ENCODE measurements at regions of chr1 and their contacts with region 1.

Region 1: DNA sequence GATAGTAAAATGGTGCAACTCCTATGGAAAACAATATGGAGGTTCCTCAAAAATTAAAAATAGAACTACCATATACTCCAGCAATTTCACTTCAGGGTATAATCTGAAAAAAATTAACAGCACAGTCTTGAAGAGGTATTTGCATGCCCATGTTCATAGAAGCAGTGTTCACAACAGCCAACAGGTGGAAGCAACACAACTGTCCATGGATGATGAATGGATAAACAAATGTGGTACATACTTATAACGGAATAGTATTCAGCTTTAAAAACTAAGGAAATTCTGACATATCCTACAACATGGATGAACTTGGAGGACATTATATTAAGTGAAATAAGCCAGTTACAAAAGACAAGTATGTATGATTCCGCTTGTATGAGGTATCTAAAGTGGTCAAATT is 8.2 kb downstream of the TTLL7 start:
- DNase-seq: no peak
- H3K4me3 ChIP-seq: no peak overlapping the region
- H3K4me3 Mint-ChIP-seq: no peak overlapping the region
- H3K27ac Mint-ChIP-seq: no peak overlapping the region
- H3K4me1 ChIP-seq: no peaks in the 10 kb centered on the region
- H3K4me1 Mint-ChIP-seq: no peaks in the 10 kb centered on the region
- H3K27me3 ChIP-seq: no peaks in the 10 kb centered on the region
- H3K27me3 Mint-ChIP-seq: peaks cover 2% of the 10 kb centered on the region
- CTCF ChIP-seq: no peak

Region 2: DNA sequence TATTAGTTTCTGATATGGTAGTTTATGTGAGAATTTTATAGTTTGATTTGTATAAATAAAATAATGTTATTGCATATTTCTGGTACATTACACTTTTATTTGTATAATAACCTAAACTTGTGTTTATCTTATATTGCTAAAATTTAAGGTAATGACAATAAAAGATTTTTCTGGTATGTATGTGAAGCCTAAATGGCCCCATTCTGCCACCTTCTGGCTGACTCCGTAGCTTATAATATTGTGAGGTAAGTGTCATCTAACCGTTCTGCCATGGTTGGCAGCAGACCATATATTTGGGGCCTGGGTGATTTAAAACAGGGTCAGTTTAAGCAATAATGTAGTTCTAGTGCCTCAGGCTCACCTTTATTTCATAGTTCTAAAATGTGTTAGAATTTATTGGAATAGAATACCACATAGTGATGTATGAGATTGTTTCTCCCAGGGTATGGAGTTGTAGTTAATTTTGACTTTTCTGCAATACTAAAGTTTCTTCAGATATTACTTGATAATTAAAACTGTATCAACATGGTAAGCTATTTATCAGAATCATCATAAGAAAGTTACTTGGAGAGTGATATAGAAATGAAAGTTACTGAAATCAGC is 132.1 kb after region 1 on chr1:
- CTCF ChIA-PET with region 1: no interaction called
- POLR2A ChIA-PET with region 1: no interaction called
- intact Hi-C with region 1: loop called (anchors 2 kb)
- DNase-seq: peak; percentile 24 to 34
- H3K4me3 ChIP-seq: no peak overlapping the region
- H3K4me3 Mint-ChIP-seq: no peak overlapping the region
- H3K27ac Mint-ChIP-seq: no peak overlapping the region
- H3K4me1 ChIP-seq: no peaks in the 10 kb centered on the region
- H3K4me1 Mint-ChIP-seq: no peaks in the 10 kb centered on the region
- H3K27me3 ChIP-seq: no peaks in the 10 kb centered on the region
- H3K27me3 Mint-ChIP-seq: no peaks in the 10 kb centered on the region
- CTCF ChIP-seq: peak; percentile 25 to 49

Region 3: GRCh38 chr1:84253891-84254290 is 263.1 kb after region 1 on chr1:
- CTCF ChIA-PET with region 1: no interaction called
- POLR2A ChIA-PET with region 1: no interaction called
- intact Hi-C with region 1: loop called (anchors 5 kb)
- DNase-seq: no peak
- H3K4me3 ChIP-seq: no peak overlapping the region
- H3K4me3 Mint-ChIP-seq: no peak overlapping the region
- H3K27ac Mint-ChIP-seq: no peak overlapping the region
- H3K4me1 ChIP-seq: no peaks in the 10 kb centered on the region
- H3K4me1 Mint-ChIP-seq: no peaks in the 10 kb centered on the region
- H3K27me3 ChIP-seq: no peaks in the 10 kb centered on the region
- H3K27me3 Mint-ChIP-seq: no peaks in the 10 kb centered on the region
- CTCF ChIP-seq: no peak

Measured in Caco-2 (cell line).